HAP-1 (cell line): ENCODE measurements at regions of chr4 and their contacts with region 1.

Region 1: DNA sequence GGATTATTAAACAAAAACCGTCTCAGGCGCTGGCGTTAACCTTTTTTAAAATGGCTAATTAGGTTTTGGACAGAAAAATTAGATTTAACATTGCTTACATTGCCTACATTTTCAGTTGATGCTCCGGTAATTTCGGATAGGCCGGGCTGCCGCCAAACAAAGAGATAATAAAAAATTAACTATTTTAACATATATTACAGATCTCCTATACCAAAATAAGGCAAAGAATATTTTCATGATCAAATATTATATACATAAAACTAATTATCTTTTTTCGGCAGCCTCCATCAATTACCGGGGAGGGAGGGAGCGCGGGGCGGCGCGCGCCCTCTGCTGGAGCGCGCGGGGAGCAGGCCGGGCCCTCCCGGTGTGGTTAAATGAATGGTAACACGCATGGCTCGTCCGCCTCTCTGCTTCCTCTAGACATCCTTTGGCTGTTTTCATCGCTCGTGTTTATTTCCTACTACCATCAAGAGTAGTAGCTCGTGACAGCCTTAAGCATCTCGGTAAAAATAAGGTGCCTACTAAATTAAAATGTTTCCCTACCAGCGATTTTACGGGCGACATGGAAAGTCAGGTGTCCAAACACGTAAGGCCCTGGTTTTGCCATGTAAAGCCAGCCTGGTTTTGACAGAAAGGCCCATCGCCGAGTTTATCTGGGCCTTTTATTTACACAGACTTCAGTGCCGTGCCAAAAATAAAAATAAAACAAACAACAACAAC is 52.4 kb upstream of the TMEM33 start:
- DNase-seq: peak; percentile 33 to 66
- H3K4me3 ChIP-seq: peak overlapping the region; percentile 24
- H3K4me1 ChIP-seq: peaks cover 15% of the 10 kb centered on the region
- H3K27me3 ChIP-seq: no peaks in the 10 kb centered on the region

Region 2: GRCh38 chr4:40719008-40719623 is 1163.7 kb before region 1 on chr4:
- in situ Hi-C with region 1: no loop called
- DNase-seq: peak; percentile 36 to 70
- H3K4me3 ChIP-seq: no peak overlapping the region
- H3K4me1 ChIP-seq: peaks cover 9% of the 10 kb centered on the region
- H3K27me3 ChIP-seq: peaks cover 5% of the 10 kb centered on the region; the same call in 1 of the 2 replicates

Region 3: DNA sequence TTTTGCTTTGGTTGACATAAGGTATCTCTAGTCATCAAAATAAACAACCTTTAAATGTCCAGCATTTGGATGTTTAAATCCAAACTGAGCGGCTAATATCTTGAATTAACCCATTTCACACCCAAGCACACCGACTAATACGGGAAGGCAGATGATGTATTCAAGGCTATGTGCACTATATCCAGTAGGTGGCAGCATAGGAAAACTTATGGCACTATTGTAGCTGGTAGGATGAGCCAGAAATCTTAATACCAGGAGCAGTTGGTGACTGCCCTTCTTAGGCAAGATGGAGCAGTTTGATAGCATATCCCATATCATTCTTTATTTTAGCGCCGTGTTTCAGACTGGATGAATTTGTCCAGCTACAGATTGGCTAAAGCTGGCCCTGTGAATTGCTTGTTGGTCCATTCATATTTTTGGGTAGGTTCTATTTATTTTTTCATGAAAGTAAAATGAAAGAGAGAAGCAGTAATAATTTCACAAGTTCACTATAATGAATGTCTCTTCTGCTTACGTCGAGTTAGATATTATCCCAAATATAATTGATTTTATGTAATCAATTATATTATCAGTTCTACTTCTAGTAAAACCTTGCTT is 601.6 kb before region 1 on chr4:
- in situ Hi-C with region 1: loop called (anchors 25 kb)
- DNase-seq: peak; percentile 78 to 87
- H3K4me3 ChIP-seq: no peak overlapping the region
- H3K4me1 ChIP-seq: peaks cover 16% of the 10 kb centered on the region
- H3K27me3 ChIP-seq: no peaks in the 10 kb centered on the region